ENCODE measurements at regions of chr6 and their contacts with region 1.

Region 1: DNA sequence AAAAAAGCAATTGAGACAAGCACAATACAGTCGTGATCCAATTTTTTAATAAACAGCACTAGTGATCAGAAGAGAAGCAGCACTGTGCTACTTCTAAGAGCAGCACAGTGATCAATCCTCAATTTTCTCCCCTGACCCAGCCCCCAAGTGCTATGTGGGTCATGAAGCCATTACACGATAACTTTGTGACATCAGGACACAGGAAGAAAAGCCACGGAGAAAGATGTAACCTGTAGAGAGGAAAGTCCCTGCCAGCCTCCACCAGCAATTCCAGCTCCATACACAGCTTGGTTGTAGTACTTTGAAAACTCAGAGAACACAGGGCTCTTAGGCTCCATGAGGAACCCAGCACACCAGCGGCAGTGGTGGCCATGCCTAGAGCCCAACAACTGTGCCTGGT is 45.3 kb upstream of the MYB start:
- DNase-seq: no peak
- H3K4me3 ChIP-seq: no peak overlapping the region
- H3K4me3 Mint-ChIP-seq: no peak overlapping the region
- H3K27ac Mint-ChIP-seq: no peak overlapping the region
- H3K4me1 ChIP-seq: peaks cover 10% of the 10 kb centered on the region; the same call in 1 of the 2 replicates
- H3K4me1 Mint-ChIP-seq: peaks cover 5% of the 10 kb centered on the region
- H3K27me3 ChIP-seq: no peaks in the 10 kb centered on the region
- H3K27me3 Mint-ChIP-seq: no peaks in the 10 kb centered on the region
- CTCF ChIP-seq: no peak

Region 2: DNA sequence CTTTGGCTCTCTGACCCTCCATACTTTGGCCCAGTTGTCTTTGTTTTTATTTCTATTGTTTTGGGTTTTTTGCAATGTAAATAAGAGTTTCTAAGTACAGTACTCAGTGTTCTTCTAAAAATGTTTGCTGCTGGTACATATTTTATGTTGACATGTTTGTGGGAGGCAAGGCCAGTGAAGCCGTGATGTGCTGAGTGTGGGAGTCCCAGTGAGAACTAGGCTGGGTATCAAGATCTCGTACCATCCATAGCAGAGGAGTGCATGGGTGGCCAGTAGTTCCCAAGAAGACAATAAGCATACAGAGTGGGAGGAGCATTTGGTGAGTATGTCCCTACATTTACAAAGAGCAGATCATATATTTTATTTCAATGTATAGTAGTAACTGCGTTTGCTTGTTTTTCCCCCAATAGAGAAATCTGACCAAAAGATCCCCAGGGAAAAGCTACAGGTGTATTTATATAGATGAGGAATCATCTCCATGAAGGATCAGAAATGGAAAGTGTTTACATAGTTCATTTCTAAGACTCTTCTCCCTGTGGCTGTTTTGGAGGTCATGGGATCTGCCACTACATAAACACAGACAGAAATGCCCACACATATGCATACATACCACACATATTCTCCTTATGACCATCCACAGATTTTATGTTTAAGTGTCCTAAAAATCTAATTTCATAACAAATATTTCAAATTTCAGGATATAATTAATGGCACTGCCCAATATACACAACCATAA is 471.9 kb before region 1 on chr6:
- CTCF ChIA-PET with region 1: no interaction called
- POLR2A ChIA-PET with region 1: no interaction called
- intact Hi-C with region 1: no loop called
- DNase-seq: no peak
- H3K4me3 ChIP-seq: no peak overlapping the region
- H3K4me3 Mint-ChIP-seq: no peak overlapping the region
- H3K27ac Mint-ChIP-seq: no peak overlapping the region
- H3K4me1 ChIP-seq: peaks cover 32% of the 10 kb centered on the region
- H3K4me1 Mint-ChIP-seq: peaks cover 23% of the 10 kb centered on the region
- H3K27me3 ChIP-seq: no peaks in the 10 kb centered on the region
- H3K27me3 Mint-ChIP-seq: no peaks in the 10 kb centered on the region
- CTCF ChIP-seq: no peak

Region 3: DNA sequence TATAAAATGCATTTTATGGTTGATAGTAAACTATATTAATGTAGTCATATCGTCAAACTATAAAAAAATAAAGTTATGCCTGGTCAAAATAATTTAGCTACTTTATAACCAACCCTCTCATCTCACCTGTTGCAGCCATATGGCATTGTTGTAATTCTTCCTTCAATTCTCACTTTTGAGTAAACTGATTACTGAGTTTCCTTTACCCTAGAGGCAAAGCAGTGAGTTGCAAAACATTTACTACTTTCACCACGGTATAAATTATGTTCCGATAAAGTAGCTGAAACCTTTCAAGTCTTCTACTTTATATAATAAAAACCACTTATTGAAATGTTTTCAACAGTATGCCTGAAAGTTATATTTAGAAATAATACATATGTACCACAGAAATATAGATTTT is 247.9 kb after region 1 on chr6:
- CTCF ChIA-PET with region 1: no interaction called
- POLR2A ChIA-PET with region 1: interaction called, 16 read pairs
- intact Hi-C with region 1: no loop called
- DNase-seq: no peak
- H3K4me3 ChIP-seq: no peak overlapping the region
- H3K4me3 Mint-ChIP-seq: no peak overlapping the region
- H3K27ac Mint-ChIP-seq: no peak overlapping the region
- H3K4me1 ChIP-seq: no peaks in the 10 kb centered on the region
- H3K4me1 Mint-ChIP-seq: peaks cover 7% of the 10 kb centered on the region
- H3K27me3 ChIP-seq: no peaks in the 10 kb centered on the region
- H3K27me3 Mint-ChIP-seq: no peaks in the 10 kb centered on the region
- CTCF ChIP-seq: peak in 1 of 2 experiments; percentile 8

Measured in Caco-2 (cell line).